A673 (cell line): ENCODE measurements at regions of chr12 and their contacts with region 1.

Region 1: GRCh38 chr12:122571821-122572220 is 44.8 kb downstream of the KNTC1 start:
- DNase-seq: no peak
- H3K4me3 ChIP-seq: no peak overlapping the region
- H3K27ac ChIP-seq: no peak overlapping the region
- H3K4me1 ChIP-seq: no peaks in the 10 kb centered on the region
- H3K27me3 ChIP-seq: no peaks in the 10 kb centered on the region
- CTCF ChIP-seq: no peak

Region 2: GRCh38 chr12:122558745-122559641 is 12.8 kb before region 1 on chr12:
- CTCF ChIA-PET with region 1: no interaction called
- POLR2A ChIA-PET with region 1: no interaction called
- intact Hi-C with region 1: loop called (anchors 1 kb)
- DNase-seq: no peak
- H3K4me3 ChIP-seq: no peak overlapping the region
- H3K27ac ChIP-seq: no peak overlapping the region
- H3K4me1 ChIP-seq: no peaks in the 10 kb centered on the region
- H3K27me3 ChIP-seq: no peaks in the 10 kb centered on the region
- CTCF ChIP-seq: no peak